A549 (cell line): ENCODE measurements at regions of chr20 and their contacts with region 1.

Region 1: DNA sequence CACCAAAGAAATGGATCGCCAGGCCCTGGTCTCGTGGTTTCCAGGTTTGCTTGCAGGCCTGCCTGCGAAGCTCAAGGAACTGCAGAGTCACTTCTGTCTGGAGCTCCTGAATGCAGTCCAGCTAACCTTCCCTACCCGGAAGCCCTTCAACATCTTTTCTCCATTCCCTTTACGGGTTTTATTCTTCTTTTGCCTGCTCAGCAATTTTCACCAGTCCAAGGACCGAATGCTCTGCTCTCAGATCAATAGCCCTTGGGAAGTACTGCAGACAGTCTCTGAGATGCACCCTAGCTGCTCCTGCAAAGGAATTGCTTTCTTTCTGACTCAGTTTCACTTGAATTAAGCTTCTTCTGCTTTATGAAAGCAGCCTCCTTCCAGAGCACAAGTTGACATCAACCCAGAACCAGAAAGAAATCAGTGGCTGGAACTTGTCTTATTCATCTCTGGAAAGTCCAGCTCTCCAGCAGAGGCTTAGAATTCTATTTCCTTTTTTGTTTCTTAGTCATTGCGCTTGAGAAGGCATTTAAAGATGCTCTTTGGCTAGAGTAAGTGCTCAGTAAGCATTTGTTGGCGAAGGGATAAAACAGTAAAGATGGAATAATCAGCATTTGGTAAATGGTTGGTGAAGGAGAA is 18.7 kb upstream of the YWHAB start:
- DNase-seq: no peak
- ATAC-seq: no peak
- H3K4me3 ChIP-seq: no peak overlapping the region
- H3K27ac ChIP-seq: peak overlapping the region in 1 of 2 experiments; percentile 36; a peak in 2 of 6 replicates
- H3K4me1 ChIP-seq: peaks cover 9% of the 10 kb centered on the region; the same call in 2 of the 3 replicates
- CTCF ChIP-seq: no peak
- EP300 ChIP-seq: no peak
- POLR2A ChIP-seq: no peak
- RAD21 ChIP-seq: no peak

Region 2: GRCh38 chr20:44754542-44754941 is 112.3 kb before region 1 on chr20:
- CTCF ChIA-PET with region 1: interaction called, 45 read pairs
- POLR2A ChIA-PET with region 1: interaction called, 3 read pairs
- DNase-seq: no peak
- ATAC-seq: no peak
- H3K4me3 ChIP-seq: no peak overlapping the region
- H3K27ac ChIP-seq: no peak overlapping the region
- H3K4me1 ChIP-seq: peaks cover 5% of the 10 kb centered on the region; the same call in 1 of the 3 replicates
- CTCF ChIP-seq: no peak
- EP300 ChIP-seq: no peak
- POLR2A ChIP-seq: no peak
- RAD21 ChIP-seq: no peak

Region 3: GRCh38 chr20:44884907-44885391 is 18.1 kb after region 1 on chr20:
- CTCF ChIA-PET with region 1: interaction called, 14 read pairs
- POLR2A ChIA-PET with region 1: interaction called, 6 read pairs
- DNase-seq: no peak
- ATAC-seq: no peak
- H3K4me3 ChIP-seq: peak overlapping the region; percentile 92
- H3K27ac ChIP-seq: peak overlapping the region; percentile 59 to 99
- H3K4me1 ChIP-seq: peaks cover 30% of the 10 kb centered on the region
- CTCF ChIP-seq: no peak
- EP300 ChIP-seq: no peak
- POLR2A ChIP-seq: no peak; the same call in 1 of the 2 replicates
- RAD21 ChIP-seq: no peak

Region 4: GRCh38 chr20:44914924-44915323 is 48.1 kb after region 1 on chr20:
- CTCF ChIA-PET with region 1: no interaction called
- POLR2A ChIA-PET with region 1: no interaction called
- DNase-seq: no peak
- ATAC-seq: no peak
- H3K4me3 ChIP-seq: no peak overlapping the region
- H3K27ac ChIP-seq: no peak overlapping the region
- H3K4me1 ChIP-seq: peaks cover 5% of the 10 kb centered on the region; the same call in 1 of the 3 replicates
- CTCF ChIP-seq: no peak
- EP300 ChIP-seq: no peak
- POLR2A ChIP-seq: no peak
- RAD21 ChIP-seq: no peak